A549 (cell line): ENCODE measurements at regions of chr19 and their contacts with region 1.

Region 1: DNA sequence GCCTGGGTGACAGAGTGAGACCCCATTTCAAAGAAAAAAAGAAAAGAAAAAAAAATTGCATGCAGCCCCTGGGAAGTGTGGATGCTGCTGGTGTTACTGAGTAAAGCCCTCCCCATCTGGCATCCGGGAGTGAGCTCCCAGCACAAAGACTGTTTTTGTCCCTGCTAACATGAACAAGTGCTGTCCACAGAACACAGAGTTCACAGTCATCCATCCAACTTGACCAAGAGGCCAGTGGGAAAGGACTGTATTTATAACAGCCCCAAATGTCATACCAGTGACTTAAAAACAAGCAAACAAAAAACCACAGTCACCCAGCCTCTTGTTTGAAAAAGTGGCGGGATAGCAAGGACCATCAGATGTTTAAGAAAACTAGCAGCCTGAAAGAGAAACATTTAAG is 10.8 kb downstream of the FBXO17 start:
- DNase-seq: no peak
- ATAC-seq: no peak
- H3K4me3 ChIP-seq: no peak overlapping the region
- H3K27ac ChIP-seq: no peak overlapping the region
- H3K4me1 ChIP-seq: peaks cover 21% of the 10 kb centered on the region
- CTCF ChIP-seq: no peak
- EP300 ChIP-seq: no peak
- POLR2A ChIP-seq: no peak
- RAD21 ChIP-seq: no peak

Region 2: DNA sequence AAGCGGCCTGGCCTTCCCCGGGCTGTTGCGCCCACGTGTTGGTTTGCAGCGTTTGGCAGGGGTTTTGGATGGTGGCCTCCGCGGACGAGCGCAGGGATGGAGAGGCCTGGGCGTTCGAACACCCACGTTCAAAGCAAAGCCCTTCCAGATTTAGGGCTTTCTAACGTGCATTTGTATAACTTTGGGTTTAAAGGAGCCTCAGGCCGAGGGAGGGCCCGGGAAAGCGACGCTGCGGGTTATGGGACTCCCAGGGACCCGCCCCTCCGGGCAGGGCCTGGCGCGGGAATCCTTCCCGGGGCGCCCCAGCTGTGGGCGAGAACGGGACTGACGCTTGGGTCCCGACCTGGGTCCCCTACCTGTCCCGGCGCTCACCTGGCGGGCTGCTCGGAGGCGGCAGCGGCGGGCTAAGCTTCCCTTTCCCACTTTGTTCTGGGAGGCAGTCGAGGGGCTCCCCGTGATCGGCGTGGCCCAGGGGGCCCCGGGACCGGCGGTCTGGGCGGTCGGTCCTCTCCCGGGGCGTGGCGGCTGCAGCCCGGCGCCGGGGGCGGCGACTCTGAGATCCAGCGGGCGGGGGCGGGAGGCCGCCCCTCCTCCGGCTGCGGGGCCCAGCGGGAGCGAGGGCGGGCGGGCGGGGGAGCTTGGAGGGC is 10.6 kb after region 1 on chr19 and contains the start of gene FBXO17:
- CTCF ChIA-PET with region 1: interaction called, 344 read pairs
- POLR2A ChIA-PET with region 1: interaction called, 22 read pairs
- DNase-seq: peak; percentile 84 to 87
- ATAC-seq: peak; percentile 83
- H3K4me3 ChIP-seq: peak within 1 kb of the TSS; percentile 51
- H3K27ac ChIP-seq: peak within 1 kb of the TSS; percentile 91 to 94
- H3K4me1 ChIP-seq: peaks cover 51% of the 10 kb centered on the region
- CTCF ChIP-seq: no peak; the same call in 2 of the 3 replicates
- EP300 ChIP-seq: 0 out of 5 replicates have a peak, but pooled peaks of 1 of the 2 experiments have one; percentile 6
- POLR2A ChIP-seq: peak; percentile 41
- RAD21 ChIP-seq: 0 out of 5 replicates have a peak, but pooled peaks have one; percentile 11 to 16
- polyA plus RNA-seq, gene FBXO17: 68.1 and 73.1 TPM in 2 replicates

Region 3: DNA sequence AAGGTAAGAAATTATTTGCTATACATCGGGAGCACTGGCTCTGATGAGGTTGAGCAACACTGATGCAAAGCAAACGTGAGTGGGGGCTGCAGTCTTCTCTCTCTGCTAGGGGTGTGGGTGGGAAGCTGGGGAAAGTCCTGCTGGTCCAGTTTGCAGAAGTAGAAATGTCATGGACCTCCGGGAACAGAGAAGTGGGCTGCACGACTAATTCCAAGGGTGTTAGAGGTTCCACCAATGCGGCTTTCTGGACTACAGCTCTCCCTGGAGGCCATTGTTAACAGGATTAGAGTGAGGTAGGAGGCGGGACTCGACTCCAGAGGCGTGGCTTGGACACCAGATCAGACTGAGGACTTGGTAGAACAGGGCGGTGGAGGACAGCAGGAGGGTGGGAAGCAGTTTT is 73.4 kb after region 1 on chr19:
- CTCF ChIA-PET with region 1: interaction called, 74 read pairs
- POLR2A ChIA-PET with region 1: no interaction called
- DNase-seq: peak; percentile 82 to 99
- ATAC-seq: peak; percentile 98 to 99
- H3K4me3 ChIP-seq: no peak overlapping the region
- H3K27ac ChIP-seq: peak overlapping the region in 1 of 2 experiments; percentile 38; a peak in 1 of 6 replicates
- H3K4me1 ChIP-seq: peaks cover 8% of the 10 kb centered on the region
- CTCF ChIP-seq: peak; percentile 48; the same call in 2 of the 3 replicates
- EP300 ChIP-seq: no peak
- POLR2A ChIP-seq: no peak
- RAD21 ChIP-seq: peak; percentile 71 to 77

Region 4: DNA sequence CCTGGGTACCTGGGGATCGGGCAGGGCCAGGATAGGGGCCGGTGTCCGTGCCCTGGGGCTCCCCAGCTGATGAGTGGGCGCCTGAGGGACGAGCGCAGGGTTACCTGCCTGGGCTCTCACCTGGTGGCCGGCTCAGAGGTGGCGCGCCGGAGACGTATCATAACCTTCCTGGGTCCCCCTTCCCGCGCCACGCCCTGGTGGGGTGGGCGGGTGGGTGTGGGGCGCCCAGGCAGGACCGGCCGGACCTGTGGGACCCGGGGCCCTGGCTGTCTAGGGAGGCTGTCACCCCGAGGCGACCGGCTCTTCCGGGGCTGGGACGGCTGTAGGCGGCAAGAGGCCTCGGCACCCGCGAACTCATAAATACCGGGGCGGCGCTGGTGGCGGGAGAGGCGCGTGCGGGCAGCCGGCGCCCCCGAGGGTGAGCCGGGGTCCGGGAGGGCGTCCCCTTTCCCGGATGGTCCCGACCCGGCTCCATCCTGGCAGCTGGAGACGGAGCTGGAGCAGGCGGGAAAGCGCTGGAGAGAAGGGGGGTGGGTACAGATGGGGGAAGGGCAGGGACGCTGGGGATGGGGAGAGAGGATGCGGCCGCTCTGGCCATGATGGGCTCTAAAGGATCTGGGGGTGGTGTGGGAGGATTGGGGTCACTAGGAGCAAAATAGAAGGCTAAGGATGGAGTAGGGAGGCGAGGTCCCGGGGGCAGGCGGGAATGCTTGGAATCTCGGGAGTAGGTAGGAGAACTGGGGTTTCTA is 119.4 kb after region 1 on chr19 and contains the start of gene ACP7:
- CTCF ChIA-PET with region 1: interaction called, 17 read pairs
- POLR2A ChIA-PET with region 1: no interaction called
- DNase-seq: no peak
- ATAC-seq: peak; percentile 41 to 45; a peak in 5 of 6 replicates
- H3K4me3 ChIP-seq: peak within 1 kb of the TSS; percentile 17; the same call in 2 of the 3 replicates
- H3K27ac ChIP-seq: peak within 1 kb of the TSS; percentile 13 to 78; a peak in 4 of 6 replicates
- H3K4me1 ChIP-seq: peaks cover 23% of the 10 kb centered on the region
- CTCF ChIP-seq: no peak
- EP300 ChIP-seq: no peak
- POLR2A ChIP-seq: no peak
- RAD21 ChIP-seq: no peak
- polyA plus RNA-seq, gene ACP7: 0.06 and 0.08 TPM in 2 replicates

Region 5: GRCh38 chr19:39125554-39126311 is 161.0 kb after region 1 on chr19 and contains the start of gene PAK4:
- CTCF ChIA-PET with region 1: interaction called, 39 read pairs
- POLR2A ChIA-PET with region 1: no interaction called
- DNase-seq: peak; percentile 99 to 100
- ATAC-seq: peak; percentile 81 to 89
- H3K4me3 ChIP-seq: peak within 1 kb of the TSS; percentile 84
- H3K27ac ChIP-seq: peak within 1 kb of the TSS; percentile 92 to 94
- H3K4me1 ChIP-seq: peaks cover 61% of the 10 kb centered on the region
- CTCF ChIP-seq: no peak
- EP300 ChIP-seq: no peak
- POLR2A ChIP-seq: peak; percentile 95
- RAD21 ChIP-seq: peak in 1 of 2 experiments; percentile 23; a peak in 1 of 5 replicates
- polyA plus RNA-seq, gene PAK4: 37.9 and 42.9 TPM in 2 replicates

Region 6: GRCh38 chr19:39182174-39182505 is 217.4 kb after region 1 on chr19:
- CTCF ChIA-PET with region 1: interaction called, 13 read pairs
- POLR2A ChIA-PET with region 1: interaction called, 3 read pairs
- DNase-seq: no peak
- ATAC-seq: peak; percentile 6 to 20; a peak in 4 of 6 replicates
- H3K4me3 ChIP-seq: no peak overlapping the region
- H3K27ac ChIP-seq: peak overlapping the region in 1 of 2 experiments; percentile 9; a peak in 2 of 6 replicates
- H3K4me1 ChIP-seq: no peaks in the 10 kb centered on the region
- CTCF ChIP-seq: no peak
- EP300 ChIP-seq: no peak
- POLR2A ChIP-seq: no peak
- RAD21 ChIP-seq: no peak